ENCODE measurements at regions of chr3 and their contacts with region 1.

Region 1: DNA sequence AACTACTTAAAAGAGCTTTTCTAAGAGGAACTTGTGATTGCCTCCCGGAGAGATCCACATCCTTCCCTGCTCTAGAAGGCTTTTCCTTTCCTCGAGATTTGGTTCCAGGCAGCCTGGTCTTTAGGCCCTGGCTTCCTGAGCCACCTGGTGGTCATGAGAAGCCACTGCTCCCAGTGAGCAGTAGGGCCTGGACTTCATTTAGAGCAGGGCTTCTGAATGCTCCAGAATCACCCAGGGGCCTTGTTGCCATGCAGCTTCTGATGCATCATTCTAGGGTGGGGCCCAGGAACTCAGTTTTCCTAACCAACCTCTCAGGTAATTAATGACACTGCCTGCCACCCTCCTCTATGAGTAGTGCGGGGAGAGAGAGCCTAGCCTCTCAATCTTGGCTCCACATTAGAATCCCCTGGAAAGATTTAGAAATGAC is 29.6 kb downstream of the PSMD6 start:
- DNase-seq: peak; percentile 64
- H3K4me3 Mint-ChIP-seq: no peak overlapping the region
- H3K27ac Mint-ChIP-seq: peak overlapping the region; percentile 45
- H3K4me1 Mint-ChIP-seq: peaks cover 46% of the 10 kb centered on the region
- H3K27me3 Mint-ChIP-seq: no peaks in the 10 kb centered on the region

Region 2: GRCh38 chr3:63976161-63976871 is 17.4 kb before region 1 on chr3:
- CTCF ChIA-PET with region 1: interaction called, 32 read pairs
- DNase-seq: no peak
- H3K4me3 Mint-ChIP-seq: no peak overlapping the region
- H3K27ac Mint-ChIP-seq: peak overlapping the region; percentile 34
- H3K4me1 Mint-ChIP-seq: peaks cover 93% of the 10 kb centered on the region
- H3K27me3 Mint-ChIP-seq: no peaks in the 10 kb centered on the region

Region 3: GRCh38 chr3:64008017-64008971 is 14.6 kb after region 1 on chr3:
- CTCF ChIA-PET with region 1: interaction called, 17 read pairs
- DNase-seq: no peak
- H3K4me3 Mint-ChIP-seq: no peak overlapping the region
- H3K27ac Mint-ChIP-seq: no peak overlapping the region
- H3K4me1 Mint-ChIP-seq: peaks cover 20% of the 10 kb centered on the region
- H3K27me3 Mint-ChIP-seq: no peaks in the 10 kb centered on the region